Aorta (tissue), 5 donors: ENCODE measurements at regions of chr16 and their contacts with region 1.

Region 1: DNA sequence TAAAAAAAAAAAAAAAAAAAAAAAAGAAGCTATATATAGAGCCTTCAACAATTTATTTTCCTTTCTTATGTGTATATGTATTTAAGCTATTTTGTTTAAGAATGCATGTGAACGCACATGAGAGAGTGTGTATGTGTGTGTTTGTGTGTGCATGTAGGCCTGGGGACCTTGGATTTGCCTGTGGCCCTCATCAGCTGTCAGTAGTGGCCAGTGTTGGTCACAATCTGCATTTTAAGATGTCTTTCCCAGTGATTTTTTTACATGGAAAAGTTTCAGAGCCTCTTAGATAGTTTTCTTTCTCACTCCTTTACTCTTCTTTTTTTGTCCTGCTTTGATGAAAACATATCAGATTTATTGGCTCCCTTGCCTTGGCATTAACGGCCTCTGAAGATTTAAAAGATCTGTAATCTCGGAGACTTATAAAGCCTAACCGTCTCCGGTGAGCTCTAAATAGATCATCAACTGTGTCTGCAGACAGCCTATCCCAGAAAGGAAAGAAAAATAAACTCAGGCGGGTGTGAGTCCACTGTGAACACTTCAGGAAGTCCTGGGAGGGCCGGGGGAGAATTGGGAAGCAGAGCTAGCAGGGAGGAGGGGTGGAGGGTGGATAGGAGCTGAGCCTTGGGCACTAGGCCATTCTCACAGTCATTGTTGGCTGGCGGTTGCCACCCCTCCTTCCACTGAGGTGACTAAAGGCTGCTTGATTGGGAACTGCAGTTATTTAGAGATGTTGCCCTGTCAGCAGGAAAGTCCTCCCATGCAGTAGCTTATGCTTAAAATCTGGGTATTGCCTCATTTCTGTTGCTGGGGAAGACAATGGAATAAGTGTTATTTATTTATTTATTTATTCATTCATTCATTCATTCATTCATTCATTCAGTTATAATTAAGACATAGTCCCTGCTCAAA is 86.8 kb downstream of the WWP2 start:
- DNase-seq: peak; percentile 95
- ATAC-seq: peak; percentile 96
- H3K4me3 ChIP-seq: peak overlapping the region in 1 of 2 donors; percentile 32
- H3K27ac ChIP-seq: peak overlapping the region; percentile 68 to 72
- H3K4me1 ChIP-seq: peaks cover 0 to 2% of the 10 kb centered on the region in 2 donors
- H3K27me3 ChIP-seq: no peaks in the 10 kb centered on the region

Region 2: GRCh38 chr16:69924777-69925191 is 75.9 kb after region 1 on chr16:
- intact Hi-C with region 1: loop called in 1 of 2 experiments (anchors 5 kb)
- DNase-seq: peak; percentile 89 to 93
- ATAC-seq: peak; percentile 84
- H3K4me3 ChIP-seq: peak overlapping the region; percentile 89 to 92
- H3K27ac ChIP-seq: peak overlapping the region; percentile 79 to 99
- H3K4me1 ChIP-seq: peaks cover 2 to 7% of the 10 kb centered on the region in 2 donors
- H3K27me3 ChIP-seq: no peaks in the 10 kb centered on the region